Naive thymus-derived CD8-positive, alpha-beta T cell (primary cell): ENCODE measurements at regions of chr1 and their contacts with region 1.

Region 1: DNA sequence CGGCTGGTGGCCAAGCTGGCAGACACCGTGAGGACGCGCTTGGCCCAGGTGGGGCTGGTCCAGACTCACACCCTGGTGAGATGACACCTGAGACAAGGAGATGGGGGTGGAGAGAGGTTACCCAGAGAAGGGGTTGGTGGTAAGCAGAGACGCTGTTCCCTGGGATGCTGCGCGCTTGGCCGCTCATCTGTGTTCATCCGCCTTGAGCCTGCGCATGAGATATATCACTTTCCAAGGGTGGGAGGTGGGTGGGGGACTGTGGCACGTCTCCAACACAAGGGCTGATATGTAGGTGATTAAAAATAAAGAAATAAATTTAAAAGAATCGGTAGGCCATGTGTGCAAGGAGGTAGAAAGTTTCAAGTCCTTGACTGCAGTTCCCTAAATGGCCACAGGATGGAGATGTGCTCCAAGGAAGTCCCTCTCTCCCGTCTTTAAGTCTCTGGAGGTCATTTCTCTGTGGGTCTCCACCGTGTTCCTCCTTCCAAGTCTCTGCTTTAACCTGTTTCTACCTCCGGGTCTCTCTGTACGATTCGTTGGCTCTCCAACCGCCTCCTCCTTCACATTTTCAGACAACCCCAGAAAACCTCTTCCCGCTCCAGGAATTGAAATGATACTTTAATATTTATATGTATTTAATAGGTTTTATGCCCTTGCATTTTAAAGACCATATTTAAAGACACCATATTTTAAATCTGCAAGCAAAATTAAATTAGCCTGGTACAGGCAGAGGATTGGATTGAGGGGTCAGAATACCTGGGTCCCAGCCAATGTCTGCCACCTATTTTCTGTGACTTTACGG is 4.5 kb downstream of the TTC24 start:
- DNase-seq: peak; percentile 54 to 87 (median 70)
- ATAC-seq: no peak
- H3K4me3 Mint-ChIP-seq: peak overlapping the region; percentile 72 to 99 (median 96)
- H3K27ac Mint-ChIP-seq: peak overlapping the region; percentile 88 to 100 (median 96)
- H3K4me1 Mint-ChIP-seq: peaks cover 23 to 53% (median 42%) of the 10 kb centered on the region in 4 donors
- H3K27me3 Mint-ChIP-seq: no peaks in the 10 kb centered on the region

Region 2: DNA sequence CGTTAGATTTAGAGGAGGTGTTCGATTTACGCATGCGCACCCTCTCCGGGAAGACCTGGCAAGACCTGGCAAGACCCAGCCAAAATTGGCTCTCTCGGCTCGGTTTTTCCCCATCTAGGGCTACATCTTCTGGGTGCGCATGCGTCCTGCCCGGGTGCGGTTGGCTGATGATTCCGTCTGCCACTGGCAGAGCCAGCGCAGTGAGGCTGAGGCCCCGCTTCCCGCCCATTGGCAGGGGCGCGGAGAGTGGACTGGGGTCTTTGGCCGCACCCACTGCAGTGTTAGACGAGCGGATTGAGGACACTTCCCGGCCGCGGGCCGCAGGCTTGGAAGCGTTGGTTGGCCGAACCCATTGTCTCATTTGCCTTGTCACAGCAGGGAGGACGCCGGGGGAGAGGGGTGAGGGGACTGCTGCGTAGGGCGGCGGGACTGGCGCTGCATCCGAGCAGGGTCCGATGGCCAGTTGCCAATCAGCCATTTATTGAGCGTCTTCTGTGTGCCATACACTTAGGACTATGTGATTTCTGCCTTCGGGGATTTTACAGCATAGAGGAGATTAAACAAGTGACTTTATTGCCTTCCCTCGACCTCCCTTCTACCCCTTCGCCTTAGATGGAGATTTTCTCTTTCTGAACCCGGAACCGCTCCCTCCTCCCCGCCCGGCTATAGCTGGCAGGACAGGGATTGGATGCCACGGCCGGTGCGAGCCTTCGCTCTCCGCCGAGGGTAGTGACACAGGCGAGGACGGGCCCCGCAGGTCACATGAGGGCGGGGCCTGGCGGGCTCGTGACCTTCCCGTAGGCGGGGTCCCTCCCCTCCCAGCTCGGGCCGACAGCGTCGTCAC is 127.2 kb before region 1 on chr1:
- POLR2A ChIA-PET with region 1: interaction called, 20 read pairs
- DNase-seq: peak; percentile 94 to 99 (median 96)
- ATAC-seq: peak; percentile 79 to 83
- H3K4me3 Mint-ChIP-seq: peak overlapping the region; percentile 89 to 97 (median 95)
- H3K27ac Mint-ChIP-seq: peak overlapping the region; percentile 94 to 100 (median 100)
- H3K4me1 Mint-ChIP-seq: peaks cover 16 to 18% (median 17%) of the 10 kb centered on the region in 4 donors
- H3K27me3 Mint-ChIP-seq: no peaks in the 10 kb centered on the region

Region 3: DNA sequence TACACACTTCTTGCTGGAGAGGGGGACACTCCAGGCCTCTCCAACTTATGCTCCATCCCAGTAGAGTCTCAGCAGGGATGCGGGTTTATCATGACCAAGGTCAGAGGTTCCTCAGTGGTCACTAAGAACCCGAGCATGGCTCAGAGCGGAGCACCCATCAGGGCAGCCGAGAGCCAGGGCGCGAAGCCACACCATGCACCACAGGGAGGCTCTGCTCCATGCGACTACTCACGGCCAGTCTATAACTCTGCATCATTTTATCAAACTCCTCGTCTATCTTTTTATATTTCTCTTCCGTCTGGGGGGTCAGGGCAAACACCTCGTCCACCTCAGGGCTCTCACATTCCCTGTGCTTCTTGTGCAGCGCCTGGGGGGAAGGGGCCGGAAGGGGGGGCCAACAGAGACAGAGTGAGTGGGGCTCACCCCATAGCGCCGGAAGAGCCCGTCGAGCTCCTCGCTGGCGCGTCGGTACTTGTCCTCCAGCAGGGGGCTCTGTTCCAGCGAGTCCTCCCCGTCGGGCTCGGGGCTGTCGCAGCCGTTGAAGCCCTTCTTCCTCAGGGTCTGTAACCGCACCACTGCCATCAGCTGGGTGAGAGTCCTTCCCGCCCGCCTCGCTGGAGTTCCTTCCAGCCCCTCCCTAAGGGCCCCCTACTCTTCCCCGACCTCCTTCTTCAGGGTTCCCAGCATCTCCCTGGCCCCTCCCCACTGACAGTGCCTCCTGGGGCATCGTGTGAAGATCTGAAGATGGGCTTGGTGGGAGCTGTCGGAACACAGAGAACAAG is 103.4 kb before region 1 on chr1:
- POLR2A ChIA-PET with region 1: interaction called, 12 read pairs
- DNase-seq: peak; percentile 66 to 91 (median 80)
- ATAC-seq: peak; percentile 86 to 93
- H3K4me3 Mint-ChIP-seq: peak overlapping the region; percentile 0 to 67 (median 52)
- H3K27ac Mint-ChIP-seq: peak overlapping the region; percentile 84 to 99 (median 94)
- H3K4me1 Mint-ChIP-seq: peaks cover 24 to 55% (median 55%) of the 10 kb centered on the region in 4 donors
- H3K27me3 Mint-ChIP-seq: no peaks in the 10 kb centered on the region

Region 4: GRCh38 chr1:156510709-156511108 is 73.3 kb before region 1 on chr1:
- POLR2A ChIA-PET with region 1: interaction called, 163 read pairs
- DNase-seq: peak in 1 of 10 donors; percentile 27
- ATAC-seq: no peak
- H3K4me3 Mint-ChIP-seq: no peak overlapping the region
- H3K27ac Mint-ChIP-seq: peak overlapping the region in 7 of 10 donors; percentile 19 to 84 (median 36)
- H3K4me1 Mint-ChIP-seq: peaks cover 15 to 49% (median 47%) of the 10 kb centered on the region in 4 donors
- H3K27me3 Mint-ChIP-seq: no peaks in the 10 kb centered on the region

Region 5: GRCh38 chr1:156560585-156561183 is 23.3 kb before region 1 on chr1:
- POLR2A ChIA-PET with region 1: no interaction called
- DNase-seq: no peak
- ATAC-seq: no peak
- H3K4me3 Mint-ChIP-seq: no peak overlapping the region
- H3K27ac Mint-ChIP-seq: no peak overlapping the region
- H3K4me1 Mint-ChIP-seq: no peaks in the 10 kb centered on the region
- H3K27me3 Mint-ChIP-seq: no peaks in the 10 kb centered on the region

Region 6: GRCh38 chr1:156571949-156572662 is 11.9 kb before region 1 on chr1 and contains the start of gene IQGAP3:
- POLR2A ChIA-PET with region 1: interaction called, 12 read pairs
- DNase-seq: peak; percentile 55 to 90 (median 68)
- ATAC-seq: peak; percentile 94 to 99
- H3K4me3 Mint-ChIP-seq: peak within 1 kb of the TSS; percentile 72 to 92 (median 88)
- H3K27ac Mint-ChIP-seq: peak within 1 kb of the TSS in 8 of 10 donors; percentile 38 to 93 (median 76)
- H3K4me1 Mint-ChIP-seq: peaks cover 12 to 20% (median 17%) of the 10 kb centered on the region in 4 donors
- H3K27me3 Mint-ChIP-seq: peaks cover 16 to 37% (median 28%) of the 10 kb centered on the region in 5 donors
- polyA plus RNA-seq, gene IQGAP3: not detected

Region 7: GRCh38 chr1:156601122-156601830 is 17.3 kb after region 1 on chr1 and contains the start of gene GPATCH4:
- POLR2A ChIA-PET with region 1: interaction called, 11 read pairs
- DNase-seq: peak; percentile 50 to 84 (median 72)
- ATAC-seq: peak; percentile 84 to 92
- H3K4me3 Mint-ChIP-seq: peak within 1 kb of the TSS; percentile 82 to 100 (median 100)
- H3K27ac Mint-ChIP-seq: peak within 1 kb of the TSS; percentile 91 to 100 (median 96)
- H3K4me1 Mint-ChIP-seq: peaks cover 18 to 41% (median 36%) of the 10 kb centered on the region in 4 donors
- H3K27me3 Mint-ChIP-seq: no peaks in the 10 kb centered on the region
- polyA plus RNA-seq, gene GPATCH4: 27.3 to 70.4 (median 42.0) TPM